Activated CD4-positive, alpha-beta memory T cell treated with anti-CD3 and anti-CD28 coated beads, Interleukin-2, amount 10 ng/mL, durations not matched to agents 7 days and 5 days (primary cell): ENCODE measurements at regions of chr17 and their contacts with region 1.

Region 1: GRCh38 chr17:44141717-44142285 is at the start of gene HROB:
- DNase-seq: peak; percentile 98
- H3K4me3 Mint-ChIP-seq: peak within 1 kb of the TSS; percentile 87
- H3K27ac Mint-ChIP-seq: peak within 1 kb of the TSS; percentile 83
- H3K4me1 Mint-ChIP-seq: peaks cover 38% of the 10 kb centered on the region
- H3K27me3 Mint-ChIP-seq: no peaks in the 10 kb centered on the region
- total RNA-seq, gene HROB: 13.4 to 13.5 TPM

Region 2: DNA sequence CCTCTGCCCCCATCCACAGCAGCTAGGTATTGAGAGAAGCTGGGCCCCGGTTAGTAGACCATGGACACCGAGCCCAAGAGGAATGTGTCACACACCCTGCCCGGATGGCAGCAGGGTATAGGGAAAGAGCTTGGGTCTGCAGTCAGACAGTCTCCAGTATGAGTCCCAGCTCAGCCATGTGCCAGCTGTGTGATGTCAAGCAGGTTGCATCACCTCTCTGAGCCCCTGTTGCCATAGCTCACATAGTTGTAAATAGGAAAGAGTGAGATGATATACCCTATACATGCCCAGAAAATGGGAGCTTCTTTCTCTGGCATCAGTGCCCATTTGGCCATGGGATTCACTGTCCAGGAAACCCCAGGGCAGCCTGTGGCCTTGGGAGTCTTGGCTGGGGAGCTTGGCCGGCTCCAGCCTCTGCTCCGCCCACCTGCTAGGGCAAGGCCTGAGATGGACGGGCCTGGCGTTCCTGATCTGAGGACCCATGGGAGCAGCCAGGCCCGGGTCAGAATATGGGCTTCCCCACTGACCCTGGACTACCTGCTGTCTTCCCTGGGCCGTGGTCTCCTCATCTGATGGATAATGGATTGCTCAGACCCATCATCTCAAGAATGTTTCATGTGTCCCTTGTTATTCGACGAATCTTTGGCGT is 281.6 kb before region 1 on chr17:
- CTCF ChIA-PET with region 1: no interaction called
- POLR2A ChIA-PET with region 1: no interaction called
- DNase-seq: no peak
- H3K4me3 Mint-ChIP-seq: no peak overlapping the region
- H3K27ac Mint-ChIP-seq: no peak overlapping the region
- H3K4me1 Mint-ChIP-seq: no peaks in the 10 kb centered on the region
- H3K27me3 Mint-ChIP-seq: peaks cover 8% of the 10 kb centered on the region

Region 3: GRCh38 chr17:44044067-44044466 is 97.7 kb before region 1 on chr17:
- CTCF ChIA-PET with region 1: no interaction called
- POLR2A ChIA-PET with region 1: no interaction called
- DNase-seq: no peak
- H3K4me3 Mint-ChIP-seq: no peak overlapping the region
- H3K27ac Mint-ChIP-seq: no peak overlapping the region
- H3K4me1 Mint-ChIP-seq: peaks cover 35% of the 10 kb centered on the region
- H3K27me3 Mint-ChIP-seq: no peaks in the 10 kb centered on the region

Region 4: GRCh38 chr17:44123356-44124117 is 18.3 kb before region 1 on chr17 and contains the start of gene HDAC5:
- CTCF ChIA-PET with region 1: interaction called, 21 read pairs
- POLR2A ChIA-PET with region 1: interaction called, 14 read pairs
- DNase-seq: peak; percentile 97
- H3K4me3 Mint-ChIP-seq: peak within 1 kb of the TSS; percentile 90
- H3K27ac Mint-ChIP-seq: peak within 1 kb of the TSS; percentile 83
- H3K4me1 Mint-ChIP-seq: peaks cover 22% of the 10 kb centered on the region
- H3K27me3 Mint-ChIP-seq: peaks cover 2% of the 10 kb centered on the region
- total RNA-seq, gene HDAC5: 42.2 to 42.7 TPM